Endothelial cell of umbilical vein (primary cell): ENCODE measurements at regions of chr11 and their contacts with region 1.

Region 1: GRCh38 chr11:61679893-61680621 is at the start of gene DAGLA:
- DNase-seq: peak; percentile 54
- H3K4me3 ChIP-seq: peak within 1 kb of the TSS in 2 of 3 experiments; percentile 9 to 42
- H3K27ac ChIP-seq: no peak within 1 kb of the TSS
- H3K4me1 ChIP-seq: peaks cover 16% of the 10 kb centered on the region
- H3K27me3 ChIP-seq: peaks cover 12 to 24% of the 10 kb centered on the region in 2 experiments
- CTCF ChIP-seq: peak; percentile 91 to 97
- POLR2A ChIP-seq: peak; percentile 37
- total RNA-seq, gene DAGLA: 3.5 and 4.7 TPM in 2 replicates

Region 2: DNA sequence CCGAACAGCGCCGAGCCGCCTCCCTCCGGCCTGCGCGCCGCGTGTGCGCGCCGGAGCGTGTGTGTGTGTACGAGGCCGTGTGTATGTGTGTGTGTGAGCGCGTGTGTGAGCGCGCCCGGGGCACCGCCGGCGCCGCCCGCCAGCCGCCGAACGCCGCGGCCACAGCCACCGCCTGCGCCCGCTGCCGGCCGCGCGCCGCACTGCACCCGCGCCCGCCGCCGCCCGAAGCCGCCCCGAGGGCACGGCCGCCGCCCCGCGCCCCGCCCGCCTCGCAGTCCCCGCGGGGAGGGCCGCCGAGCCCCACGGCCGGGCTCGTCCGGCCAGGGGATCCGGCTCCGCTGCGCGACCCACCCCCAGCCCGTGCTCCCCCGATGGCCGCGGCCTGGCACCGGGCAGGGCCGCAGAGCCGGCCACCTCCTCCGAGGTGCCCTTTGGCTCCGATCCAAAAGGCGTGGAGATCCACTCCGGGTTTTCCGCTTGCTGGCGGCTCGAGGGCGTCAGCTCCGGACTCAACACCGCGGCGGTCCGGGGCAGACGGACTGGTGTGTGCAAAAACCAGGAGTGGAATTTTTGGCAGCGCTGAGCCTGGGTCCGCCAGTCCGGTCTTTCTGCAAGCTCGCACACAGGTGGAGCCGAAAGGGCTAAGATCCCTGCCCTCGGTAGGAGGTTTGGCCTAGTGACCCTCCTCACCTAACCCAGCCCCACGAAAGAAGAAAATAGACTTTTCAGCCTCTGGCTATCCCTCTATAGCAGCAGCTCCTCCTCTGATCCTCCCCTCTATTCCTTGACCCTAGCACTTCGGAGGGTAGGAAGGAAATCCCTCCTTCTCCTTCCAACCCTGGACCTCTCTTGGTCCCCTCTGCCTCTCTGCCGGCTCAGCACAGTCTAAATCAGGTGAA is 98.8 kb before region 1 on chr11 and contains the start of gene SYT7:
- CTCF ChIA-PET with region 1: no interaction called
- POLR2A ChIA-PET with region 1: no interaction called
- dilution Hi-C with region 1: no loop called
- intact Hi-C with region 1: loop called (anchors 5 kb)
- DNase-seq: peak; percentile 94
- H3K4me3 ChIP-seq: peak within 1 kb of the TSS in 1 of 3 experiments; percentile 22
- H3K27ac ChIP-seq: no peak within 1 kb of the TSS
- H3K4me1 ChIP-seq: no peaks in the 10 kb centered on the region
- H3K27me3 ChIP-seq: peaks cover 25 to 32% of the 10 kb centered on the region in 2 experiments
- CTCF ChIP-seq: peak in 1 of 2 donors; percentile 21
- POLR2A ChIP-seq: no peak
- total RNA-seq, gene SYT7: 0.55 and 0.78 TPM in 2 replicates

Region 3: GRCh38 chr11:61695917-61696316 is 15.9 kb after region 1 on chr11:
- CTCF ChIA-PET with region 1: interaction called, 5 read pairs
- POLR2A ChIA-PET with region 1: no interaction called
- dilution Hi-C with region 1: no loop called
- intact Hi-C with region 1: loop called (anchors 2 kb)
- DNase-seq: peak; percentile 71
- H3K4me3 ChIP-seq: no peak overlapping the region
- H3K27ac ChIP-seq: peak overlapping the region; percentile 45
- H3K4me1 ChIP-seq: peaks cover 11% of the 10 kb centered on the region
- H3K27me3 ChIP-seq: no peaks in the 10 kb centered on the region
- CTCF ChIP-seq: peak in 1 of 2 donors; percentile 7
- POLR2A ChIP-seq: no peak

Region 4: DNA sequence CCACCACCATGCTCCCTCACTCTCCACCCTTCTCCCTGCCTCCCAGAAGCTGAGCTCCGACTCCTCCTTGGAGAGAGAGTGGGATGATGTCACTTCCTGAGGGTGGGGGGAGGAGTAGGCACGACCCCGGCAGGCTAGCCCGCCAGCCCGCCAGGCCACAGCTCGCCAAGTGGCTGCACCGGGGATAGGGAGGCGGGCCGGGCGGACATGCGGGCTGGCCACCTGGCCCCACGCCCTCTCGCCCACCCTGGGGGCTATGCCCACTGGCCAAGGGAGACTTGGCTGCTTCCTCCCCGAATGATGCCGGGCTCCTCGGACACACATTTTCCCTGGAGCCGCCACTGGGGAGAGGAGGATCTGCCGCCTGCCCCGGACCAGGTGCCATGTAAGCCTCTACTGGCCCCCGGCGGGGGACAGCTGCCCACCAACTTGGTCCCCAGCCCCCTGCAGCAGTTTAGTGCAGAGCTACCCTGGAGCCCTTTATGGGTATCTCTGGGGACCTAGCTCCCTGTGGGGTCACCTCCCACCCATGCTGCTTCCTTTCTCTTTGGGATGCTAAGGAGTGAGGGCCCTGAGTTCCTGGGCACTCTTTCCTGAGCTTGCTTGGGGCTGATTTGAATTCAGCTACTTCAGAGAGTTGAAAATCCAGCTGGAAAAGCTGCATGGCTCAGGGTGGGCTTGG is 38.7 kb after region 1 on chr11:
- CTCF ChIA-PET with region 1: no interaction called
- POLR2A ChIA-PET with region 1: no interaction called
- dilution Hi-C with region 1: no loop called
- intact Hi-C with region 1: loop called (anchors 5 kb)
- DNase-seq: peak; percentile 64
- H3K4me3 ChIP-seq: peak overlapping the region in 2 of 3 experiments; percentile 1 to 19
- H3K27ac ChIP-seq: peak overlapping the region; percentile 32
- H3K4me1 ChIP-seq: peaks cover 28% of the 10 kb centered on the region
- H3K27me3 ChIP-seq: no peaks in the 10 kb centered on the region
- CTCF ChIP-seq: no peak
- POLR2A ChIP-seq: peak; percentile 16

Region 5: DNA sequence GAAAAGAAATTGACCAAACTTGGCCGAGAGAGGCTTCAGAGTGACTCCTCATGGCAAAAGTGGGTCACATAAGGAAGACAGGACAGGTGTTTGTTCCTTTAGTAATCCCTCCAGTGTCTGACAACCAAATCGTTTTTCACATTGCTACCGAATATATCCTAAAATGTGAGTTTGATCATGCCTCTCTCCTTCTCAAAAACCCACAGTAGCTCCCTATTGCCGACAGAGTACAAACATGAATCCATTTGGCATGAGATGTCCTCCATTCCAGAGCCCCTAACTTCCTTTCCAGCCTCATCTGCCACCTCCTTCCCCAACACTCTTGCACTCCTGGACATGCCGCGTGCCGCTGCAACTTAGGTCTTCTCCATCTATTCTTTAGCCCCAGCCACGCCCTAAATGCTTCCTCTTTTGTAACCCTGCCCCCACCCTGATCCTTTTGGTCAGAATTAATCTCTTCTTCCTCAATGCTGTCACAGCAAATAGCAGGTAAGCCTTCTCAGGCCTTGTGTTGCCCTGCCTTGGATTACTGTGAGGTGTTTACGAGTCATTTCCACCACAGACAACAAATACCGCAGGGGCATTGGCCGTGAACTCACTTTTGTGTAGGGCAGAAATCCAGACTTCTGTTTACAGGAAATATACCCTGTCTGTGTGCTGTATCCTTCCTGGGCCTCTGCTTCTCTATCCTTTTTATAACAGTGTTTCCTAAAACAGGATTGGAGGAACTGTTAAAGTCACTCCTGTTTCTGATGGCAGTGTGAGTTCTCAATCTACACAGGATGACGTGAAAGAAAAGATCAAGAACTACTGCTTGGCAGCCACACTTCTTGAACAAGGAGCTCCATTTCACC is 353.4 kb after region 1 on chr11:
- CTCF ChIA-PET with region 1: no interaction called
- POLR2A ChIA-PET with region 1: no interaction called
- dilution Hi-C with region 1: no loop called
- intact Hi-C with region 1: no loop called
- DNase-seq: peak; percentile 25
- H3K4me3 ChIP-seq: no peak overlapping the region
- H3K27ac ChIP-seq: peak overlapping the region; percentile 2
- H3K4me1 ChIP-seq: peaks cover 9% of the 10 kb centered on the region
- H3K27me3 ChIP-seq: no peaks in the 10 kb centered on the region
- CTCF ChIP-seq: no peak
- POLR2A ChIP-seq: no peak